Ovary (tissue), 10 donors: ENCODE measurements at regions of chr14 and their contacts with region 1.

Region 1: DNA sequence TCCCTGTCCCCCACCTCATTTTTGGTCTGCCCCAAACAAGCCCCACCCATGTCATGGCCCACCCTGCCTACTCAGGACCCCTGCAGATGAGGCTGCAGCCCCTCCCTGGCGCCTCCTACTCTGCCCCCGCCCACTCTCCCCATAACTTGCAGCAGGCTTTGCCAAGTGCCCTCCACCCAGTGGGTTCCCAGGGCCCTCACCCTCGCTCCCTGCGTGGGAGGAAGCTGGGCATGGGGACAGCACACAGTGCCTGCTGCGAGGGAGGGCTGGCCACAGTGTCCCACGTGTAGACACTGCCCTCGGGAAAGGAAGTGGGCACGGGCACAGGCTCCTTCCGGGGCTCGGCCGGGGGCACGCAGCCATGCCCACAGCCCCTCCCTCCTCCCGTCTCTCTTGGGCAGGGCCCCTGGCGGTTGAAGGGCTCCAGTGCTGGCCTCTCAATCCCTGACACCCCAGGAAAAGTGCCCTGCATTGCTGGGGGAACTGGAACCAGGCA is 9.4 kb downstream of the AKT1 start:
- DNase-seq: no peak
- H3K4me3 ChIP-seq: no peak overlapping the region
- H3K27ac ChIP-seq: no peak overlapping the region
- H3K4me1 ChIP-seq: peaks cover 13% of the 10 kb centered on the region
- H3K27me3 ChIP-seq: no peaks in the 10 kb centered on the region
- CTCF ChIP-seq: no peak
- EP300 ChIP-seq: no peak
- POLR2A ChIP-seq: no peak

Region 2: GRCh38 chr14:104731249-104731924 is 54.8 kb before region 1 on chr14:
- intact Hi-C with region 1: no loop called
- DNase-seq: no peak
- H3K4me3 ChIP-seq: no peak overlapping the region
- H3K27ac ChIP-seq: no peak overlapping the region
- H3K4me1 ChIP-seq: no peaks in the 10 kb centered on the region
- H3K27me3 ChIP-seq: no peaks in the 10 kb centered on the region
- CTCF ChIP-seq: no peak
- EP300 ChIP-seq: no peak
- POLR2A ChIP-seq: no peak

Region 3: DNA sequence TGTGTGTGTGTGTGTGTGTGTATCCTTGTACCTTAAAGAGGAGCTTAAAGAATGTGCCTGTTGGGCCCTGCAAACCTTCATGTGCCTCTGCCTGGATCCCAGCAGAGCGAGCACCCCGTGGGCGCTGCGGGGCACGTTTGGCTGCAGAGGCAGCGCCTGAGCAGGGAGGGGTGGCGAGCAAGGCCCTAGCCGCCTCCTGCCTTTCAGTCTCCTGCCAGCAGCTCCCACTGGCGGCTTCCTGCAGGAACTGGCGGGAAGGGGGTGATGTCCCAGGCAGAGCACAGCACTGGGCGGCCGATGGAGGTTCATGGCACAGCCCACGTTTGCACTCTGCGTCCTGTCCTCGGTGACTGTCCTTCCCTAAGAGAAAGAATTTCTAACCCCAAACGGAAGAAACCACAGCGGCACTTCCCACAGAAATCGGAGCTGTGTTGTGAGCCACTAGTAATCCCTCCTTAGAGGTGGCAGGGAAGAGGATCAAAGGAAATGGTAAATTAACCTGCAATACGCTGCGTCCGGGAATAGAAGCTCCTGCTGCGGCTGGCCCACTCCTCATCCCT is 34.6 kb after region 1 on chr14:
- intact Hi-C with region 1: loop called in 2 of 4 experiments (anchors 5 kb)
- DNase-seq: peak; percentile 46 to 73 (median 65)
- H3K4me3 ChIP-seq: no peak overlapping the region
- H3K27ac ChIP-seq: no peak overlapping the region
- H3K4me1 ChIP-seq: no peaks in the 10 kb centered on the region
- H3K27me3 ChIP-seq: no peaks in the 10 kb centered on the region
- CTCF ChIP-seq: peak in 2 of 3 donors; percentile 37 to 39
- EP300 ChIP-seq: no peak
- POLR2A ChIP-seq: no peak